ENCODE measurements at regions of chr1 and their contacts with region 1.

Region 1: GRCh38 chr1:225777583-225778336 is at the start of gene SRP9:
- DNase-seq: peak; percentile 97
- ATAC-seq: peak; percentile 99
- H3K4me3 ChIP-seq: peak within 1 kb of the TSS; percentile 96 to 99 (median 97)
- H3K27ac ChIP-seq: peak within 1 kb of the TSS; percentile 97
- H3K4me1 ChIP-seq: peaks cover 65% of the 10 kb centered on the region
- H3K27me3 ChIP-seq: no peaks in the 10 kb centered on the region; a peak in 1 of 5 replicates
- CTCF ChIP-seq: peak; percentile 99
- EP300 ChIP-seq: peak in 1 of 2 experiments; percentile 14; a peak in 1 of 4 replicates
- POLR2A ChIP-seq: peak; percentile 58 to 81
- RAD21 ChIP-seq: peak; percentile 90
- total RNA-seq, gene SRP9: 251 and 524 TPM in 2 replicates

Region 2: DNA sequence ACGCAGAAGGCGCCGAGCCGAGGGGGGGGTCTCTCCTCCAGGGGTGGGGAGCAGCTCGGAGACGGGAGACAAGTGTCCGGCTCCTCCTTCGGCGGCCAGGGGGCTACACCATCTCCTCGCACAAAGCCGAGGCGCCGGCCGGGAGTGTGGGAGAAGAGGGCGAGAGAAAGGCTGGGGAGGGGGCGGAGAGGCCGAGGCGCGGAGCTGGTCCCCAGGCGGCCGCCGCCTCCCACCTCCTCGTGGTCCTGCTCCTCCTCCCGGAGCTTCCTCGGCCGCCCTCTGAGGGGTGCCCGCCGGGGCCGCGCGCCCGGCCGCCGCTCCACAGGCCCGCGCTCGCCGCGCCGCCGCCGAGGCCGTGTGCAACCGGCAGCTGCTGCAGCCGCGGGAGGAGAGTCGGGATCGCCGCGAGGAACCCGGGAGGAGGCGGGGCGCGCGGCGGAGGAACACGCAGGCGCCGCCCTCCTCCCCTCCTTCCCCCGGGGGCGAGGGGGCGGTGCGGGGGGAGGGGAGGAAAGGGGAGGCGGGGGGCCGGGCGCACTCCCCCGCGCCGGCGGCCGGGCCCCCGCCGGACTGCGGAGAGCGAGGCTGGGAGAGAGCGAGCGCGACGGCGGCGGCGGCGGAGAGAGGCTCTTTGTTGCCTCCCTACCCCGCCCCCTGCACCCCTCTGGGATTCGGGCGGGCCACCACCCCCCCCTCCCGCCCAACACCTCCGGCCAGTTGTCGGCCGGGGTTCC is 124.9 kb before region 1 on chr1 and contains the start of gene ENAH:
- CTCF ChIA-PET with region 1: no interaction called
- POLR2A ChIA-PET with region 1: interaction called, 19 read pairs
- in situ Hi-C with region 1: no loop called
- intact Hi-C with region 1: loop called (anchors 2 kb)
- DNase-seq: peak; percentile 49
- ATAC-seq: peak; percentile 80
- H3K4me3 ChIP-seq: peak within 1 kb of the TSS; percentile 86 to 98 (median 94)
- H3K27ac ChIP-seq: peak within 1 kb of the TSS; percentile 66
- H3K4me1 ChIP-seq: peaks cover 57% of the 10 kb centered on the region
- H3K27me3 ChIP-seq: no peaks in the 10 kb centered on the region; a peak in 1 of 5 replicates
- CTCF ChIP-seq: no peak
- EP300 ChIP-seq: no peak
- POLR2A ChIP-seq: peak in 1 of 2 experiments; percentile 60; a peak in 3 of 4 replicates
- RAD21 ChIP-seq: 0 out of 2 replicates have a peak, but pooled peaks have one; percentile 46
- total RNA-seq, gene ENAH: 58.3 and 60.2 TPM in 2 replicates

Region 3: DNA sequence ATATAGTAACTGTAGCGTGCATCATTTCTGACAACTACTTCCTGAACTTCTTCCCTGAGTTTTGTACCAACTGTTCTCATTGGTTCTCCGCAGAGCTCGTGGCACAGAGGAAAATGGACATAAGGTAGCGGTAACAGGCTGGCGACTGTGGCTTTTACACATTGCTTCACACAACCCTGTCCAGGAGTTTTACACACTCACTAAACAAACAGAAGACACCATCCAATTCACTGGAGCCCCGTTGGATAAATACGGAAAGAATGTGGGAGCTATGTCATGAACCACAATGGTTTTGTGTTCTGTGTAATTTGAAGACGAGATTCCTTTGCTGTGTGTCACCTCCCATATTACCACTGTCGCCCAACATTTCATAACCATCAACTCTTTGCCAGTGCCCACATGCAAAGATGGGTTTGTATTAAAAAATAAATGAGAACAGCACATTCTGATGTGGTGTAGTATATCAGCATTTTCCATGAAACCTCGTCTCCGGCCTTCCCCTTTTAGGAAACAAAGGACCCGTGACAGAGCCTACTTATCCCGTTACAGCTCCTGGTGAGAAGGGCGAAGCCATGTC is 77.5 kb before region 1 on chr1:
- CTCF ChIA-PET with region 1: no interaction called
- POLR2A ChIA-PET with region 1: interaction called, 14 read pairs
- in situ Hi-C with region 1: no loop called
- intact Hi-C with region 1: loop called (anchors 2 kb)
- DNase-seq: peak; percentile 100
- ATAC-seq: peak; percentile 90
- H3K4me3 ChIP-seq: peak overlapping the region in 2 of 3 experiments; percentile 14 to 26; a peak in 2 of 6 replicates
- H3K27ac ChIP-seq: peak overlapping the region; percentile 71
- H3K4me1 ChIP-seq: peaks cover 58% of the 10 kb centered on the region
- H3K27me3 ChIP-seq: no peaks in the 10 kb centered on the region
- CTCF ChIP-seq: no peak
- EP300 ChIP-seq: peak; percentile 55 to 91; a peak in 3 of 4 replicates
- POLR2A ChIP-seq: peak in 1 of 2 experiments; percentile 48; a peak in 1 of 4 replicates
- RAD21 ChIP-seq: no peak

Region 4: GRCh38 chr1:225710804-225711203 is 67.0 kb before region 1 on chr1:
- CTCF ChIA-PET with region 1: no interaction called
- POLR2A ChIA-PET with region 1: no interaction called
- in situ Hi-C with region 1: no loop called
- intact Hi-C with region 1: no loop called
- DNase-seq: no peak
- ATAC-seq: no peak
- H3K4me3 ChIP-seq: no peak overlapping the region
- H3K27ac ChIP-seq: no peak overlapping the region
- H3K4me1 ChIP-seq: peaks cover 30% of the 10 kb centered on the region
- H3K27me3 ChIP-seq: no peaks in the 10 kb centered on the region
- CTCF ChIP-seq: no peak
- EP300 ChIP-seq: no peak
- POLR2A ChIP-seq: no peak
- RAD21 ChIP-seq: no peak

Region 5: GRCh38 chr1:225766967-225767633 is 10.7 kb before region 1 on chr1:
- CTCF ChIA-PET with region 1: no interaction called
- POLR2A ChIA-PET with region 1: interaction called, 72 read pairs
- in situ Hi-C with region 1: no loop called
- intact Hi-C with region 1: no loop called
- DNase-seq: peak; percentile 56
- ATAC-seq: peak; percentile 1; the same call in 2 of the 3 replicates
- H3K4me3 ChIP-seq: peak overlapping the region; percentile 14 to 69 (median 52)
- H3K27ac ChIP-seq: peak overlapping the region; percentile 79
- H3K4me1 ChIP-seq: peaks cover 90% of the 10 kb centered on the region
- H3K27me3 ChIP-seq: no peaks in the 10 kb centered on the region
- CTCF ChIP-seq: no peak
- EP300 ChIP-seq: no peak
- POLR2A ChIP-seq: peak in 1 of 2 experiments; percentile 50; a peak in 2 of 4 replicates
- RAD21 ChIP-seq: no peak

Region 6: DNA sequence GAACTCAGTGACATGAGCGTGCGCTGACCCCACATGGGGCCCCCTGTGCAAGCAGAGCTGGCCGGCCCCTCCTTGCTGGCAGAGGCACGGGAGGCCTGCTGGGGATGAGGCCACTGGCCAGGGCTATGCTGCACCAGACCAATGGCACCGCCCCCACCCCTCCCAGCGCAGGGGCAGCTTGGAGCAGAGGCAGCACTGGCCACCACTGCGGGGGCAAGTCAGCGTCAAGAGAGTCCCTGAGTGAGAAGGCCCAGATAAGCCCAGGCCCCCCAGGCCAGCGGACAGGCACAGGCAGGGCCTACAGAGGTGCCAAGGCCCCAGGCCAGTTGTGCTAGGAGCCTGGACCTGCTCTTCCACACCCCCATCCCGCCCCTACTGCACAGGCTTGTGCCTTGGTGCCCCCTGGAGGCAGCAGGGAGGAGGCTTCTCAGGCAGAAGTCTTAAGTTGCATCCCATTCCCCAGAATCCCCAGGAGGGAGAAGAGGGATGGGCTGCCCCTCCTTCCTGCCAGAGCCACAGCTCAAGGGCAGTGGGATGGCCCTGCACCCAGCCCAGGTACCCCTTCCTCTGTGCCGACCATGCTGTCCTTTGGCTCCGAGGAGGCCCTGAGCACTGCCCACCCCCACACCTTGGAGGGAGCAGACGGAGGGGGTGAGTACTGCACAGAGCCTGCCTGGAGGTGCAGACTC is 68.0 kb after region 1 on chr1:
- CTCF ChIA-PET with region 1: interaction called, 9 read pairs
- POLR2A ChIA-PET with region 1: interaction called, 3 read pairs
- in situ Hi-C with region 1: no loop called
- intact Hi-C with region 1: loop called (anchors 1 kb)
- DNase-seq: peak; percentile 71
- ATAC-seq: peak; percentile 87
- H3K4me3 ChIP-seq: no peak overlapping the region
- H3K27ac ChIP-seq: no peak overlapping the region
- H3K4me1 ChIP-seq: no peaks in the 10 kb centered on the region
- H3K27me3 ChIP-seq: no peaks in the 10 kb centered on the region
- CTCF ChIP-seq: peak; percentile 93
- EP300 ChIP-seq: no peak
- POLR2A ChIP-seq: peak; percentile 19 to 29; a peak in 1 of 4 replicates
- RAD21 ChIP-seq: peak; percentile 91

Region 7: DNA sequence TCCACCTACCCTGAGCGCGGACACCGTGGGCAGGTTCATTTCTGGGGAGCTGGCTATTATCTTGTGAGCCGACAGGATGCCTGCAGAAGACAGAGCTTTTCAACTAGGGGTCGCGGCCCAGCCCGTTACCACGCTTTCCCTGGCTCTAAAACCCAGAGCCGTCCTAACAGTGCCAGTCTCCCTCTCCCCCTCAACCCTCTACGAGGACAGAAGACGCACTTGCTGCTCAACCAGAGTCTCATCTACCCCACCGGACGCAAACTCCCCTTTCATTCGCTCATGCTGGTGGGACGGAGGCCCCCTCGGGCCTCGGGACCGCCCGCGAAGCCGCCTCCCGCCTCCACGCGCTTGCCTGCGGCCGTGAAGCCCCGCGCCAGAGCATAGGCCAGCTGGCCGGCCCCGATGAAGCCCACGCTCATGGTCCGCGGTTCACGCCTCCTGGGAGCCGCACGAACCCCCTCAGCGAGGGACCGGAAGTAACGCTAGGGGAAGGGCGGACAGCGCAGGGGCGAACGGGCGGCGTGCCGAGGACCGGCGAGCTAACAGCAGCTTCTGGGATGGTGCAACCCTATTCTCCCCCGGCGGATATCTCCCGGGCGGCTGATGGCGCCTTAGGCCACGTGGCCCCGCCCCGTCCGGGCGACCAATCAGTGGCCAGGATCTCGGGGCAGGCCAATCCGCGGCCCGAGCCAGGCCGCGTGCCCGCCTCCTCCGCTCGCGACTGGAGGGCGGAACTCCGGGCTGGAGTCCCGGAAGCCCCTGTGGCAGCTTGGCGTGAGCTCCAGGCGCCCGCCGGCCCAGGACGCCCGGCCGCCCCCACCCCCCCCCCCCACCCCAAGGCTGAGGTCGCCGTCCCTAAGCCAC is 146.2 kb after region 1 on chr1 and contains the start of gene PYCR2:
- CTCF ChIA-PET with region 1: no interaction called
- POLR2A ChIA-PET with region 1: interaction called, 11 read pairs
- in situ Hi-C with region 1: no loop called
- intact Hi-C with region 1: loop called (anchors 5 kb)
- DNase-seq: peak; percentile 91
- ATAC-seq: peak; percentile 97
- H3K4me3 ChIP-seq: peak within 1 kb of the TSS; percentile 81 to 94 (median 82)
- H3K27ac ChIP-seq: peak within 1 kb of the TSS; percentile 89
- H3K4me1 ChIP-seq: peaks cover 22% of the 10 kb centered on the region
- H3K27me3 ChIP-seq: no peaks in the 10 kb centered on the region; a peak in 2 of 5 replicates
- CTCF ChIP-seq: peak; percentile 33; the same call in 1 of the 2 replicates
- EP300 ChIP-seq: no peak
- POLR2A ChIP-seq: peak; percentile 52 to 96
- RAD21 ChIP-seq: no peak
- total RNA-seq, gene PYCR2: 47.8 and 49.5 TPM in 2 replicates

Measured in HepG2 (cell line).